ENCODE measurements at regions of chr3 and their contacts with region 1.

Region 1: GRCh38 chr3:123642182-123642956 is 57.5 kb upstream of the HACD2 start:
- DNase-seq: peak; percentile 79
- CTCF ChIP-seq: peak; percentile 69

Region 2: DNA sequence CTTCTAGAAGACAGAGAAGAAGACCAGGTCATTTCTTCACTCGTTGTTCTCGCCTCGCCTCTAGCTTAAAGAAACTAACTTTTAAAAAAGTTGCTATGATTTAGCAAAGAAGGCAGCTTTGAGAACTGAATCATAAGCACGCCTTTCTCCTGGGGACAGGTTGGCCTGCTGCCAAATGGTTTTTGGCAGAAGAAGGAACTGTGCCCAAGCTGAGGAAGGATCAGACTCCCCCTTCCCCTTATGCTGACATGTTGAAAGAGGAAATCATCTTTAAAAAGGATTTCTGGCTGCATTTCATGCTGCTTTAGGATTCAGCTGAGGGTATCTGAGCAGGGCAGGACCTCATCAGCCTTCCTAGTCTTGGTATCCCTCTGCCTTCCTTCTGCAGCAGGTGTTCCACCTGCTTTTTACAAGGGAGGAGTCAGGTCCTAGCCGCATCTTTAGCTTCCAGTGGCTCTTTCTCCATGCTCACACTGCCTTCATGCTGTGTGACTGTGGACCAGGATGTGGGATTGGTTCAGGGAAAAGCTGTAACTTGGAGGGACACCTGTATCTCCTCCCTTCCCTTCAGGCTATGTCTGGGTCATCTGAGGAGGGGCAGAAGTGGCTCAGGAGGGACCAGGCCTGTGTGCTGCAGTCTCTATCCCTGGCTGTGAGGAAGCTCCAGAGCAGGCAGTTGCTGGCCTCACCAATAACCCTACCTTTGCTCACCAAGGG is 23.4 kb before region 1 on chr3:
- CTCF ChIA-PET with region 1: interaction called, 14 read pairs
- POLR2A ChIA-PET with region 1: no interaction called
- DNase-seq: no peak
- CTCF ChIP-seq: no peak

Region 3: GRCh38 chr3:123632161-123632655 is 10.2 kb before region 1 on chr3:
- CTCF ChIA-PET with region 1: interaction called, 24 read pairs
- POLR2A ChIA-PET with region 1: no interaction called
- DNase-seq: no peak
- CTCF ChIP-seq: no peak

Region 4: DNA sequence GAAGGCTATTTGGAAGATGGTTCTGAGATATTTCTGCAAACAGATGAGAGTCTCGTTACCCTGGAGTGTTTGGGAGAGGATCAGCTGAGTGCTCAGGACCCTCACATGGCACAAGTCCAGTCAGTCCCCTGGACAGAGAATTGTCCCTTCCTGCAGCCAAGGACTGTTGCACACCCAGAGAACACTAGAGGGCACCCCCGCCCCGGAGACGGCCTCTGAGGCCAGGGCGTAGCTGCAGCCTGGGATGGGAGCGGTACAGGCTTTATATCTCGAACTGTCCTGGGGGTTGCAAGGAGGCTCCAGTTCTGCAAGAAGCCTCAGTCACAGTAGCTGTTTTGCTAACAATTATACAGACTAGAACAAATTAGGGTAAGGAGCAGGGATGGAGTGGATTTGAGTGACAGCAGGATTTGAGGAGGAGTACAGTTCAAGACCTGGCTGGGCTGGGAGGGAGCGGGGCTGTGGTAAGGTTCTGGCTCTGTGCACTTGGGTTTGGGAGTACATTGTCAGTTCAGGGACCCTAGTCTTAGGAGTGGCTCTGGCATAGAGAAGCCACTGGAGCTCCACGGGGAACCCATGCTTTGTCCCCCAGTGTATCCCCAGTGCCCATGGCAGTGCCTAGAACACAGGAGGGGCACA is 10.1 kb after region 1 on chr3:
- CTCF ChIA-PET with region 1: interaction called, 71 read pairs
- POLR2A ChIA-PET with region 1: no interaction called
- DNase-seq: peak; percentile 77
- CTCF ChIP-seq: peak; percentile 89

Region 5: DNA sequence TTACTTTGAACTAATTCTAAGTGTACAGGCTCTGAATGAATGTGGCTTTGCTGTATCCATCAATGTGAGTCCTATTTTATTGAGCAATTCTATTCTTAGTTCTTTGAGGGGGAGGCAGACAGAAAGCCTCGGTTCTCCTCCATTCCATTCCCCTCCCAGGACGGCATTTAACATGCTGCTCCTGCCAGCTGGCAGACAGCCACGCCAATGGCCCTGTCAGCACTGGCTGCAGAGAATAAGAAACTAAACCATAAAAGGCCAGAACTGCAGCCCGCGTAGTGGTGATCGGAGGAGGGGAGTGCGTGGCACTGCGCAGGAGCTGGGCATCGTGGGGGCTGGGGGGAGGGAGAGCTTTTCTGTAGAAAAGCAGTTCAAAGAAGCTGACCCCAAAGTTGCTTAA is 18.5 kb after region 1 on chr3:
- CTCF ChIA-PET with region 1: interaction called, 71 read pairs
- POLR2A ChIA-PET with region 1: no interaction called
- DNase-seq: no peak
- CTCF ChIP-seq: no peak

Region 6: DNA sequence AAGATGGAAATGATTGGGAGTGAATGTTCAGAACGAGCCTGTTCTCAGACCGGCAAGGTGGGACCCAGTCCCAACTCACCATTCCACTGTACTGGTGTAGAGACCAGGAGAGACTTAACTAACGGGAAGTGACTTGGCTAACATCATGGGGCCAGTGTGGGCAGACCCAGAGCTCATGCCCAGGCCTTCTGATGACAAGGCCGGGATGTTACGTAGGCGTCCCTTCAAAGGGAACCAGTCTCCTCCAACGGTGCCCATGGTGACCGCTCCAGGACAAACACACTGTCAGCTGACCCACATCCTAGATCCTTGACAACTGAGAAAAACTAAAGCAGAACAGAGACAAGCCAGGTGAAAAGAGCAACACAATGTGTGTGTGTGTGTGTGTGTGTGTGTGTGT is 70.8 kb after region 1 on chr3:
- CTCF ChIA-PET with region 1: interaction called, 24 read pairs
- POLR2A ChIA-PET with region 1: no interaction called
- DNase-seq: no peak
- CTCF ChIP-seq: no peak

Region 7: DNA sequence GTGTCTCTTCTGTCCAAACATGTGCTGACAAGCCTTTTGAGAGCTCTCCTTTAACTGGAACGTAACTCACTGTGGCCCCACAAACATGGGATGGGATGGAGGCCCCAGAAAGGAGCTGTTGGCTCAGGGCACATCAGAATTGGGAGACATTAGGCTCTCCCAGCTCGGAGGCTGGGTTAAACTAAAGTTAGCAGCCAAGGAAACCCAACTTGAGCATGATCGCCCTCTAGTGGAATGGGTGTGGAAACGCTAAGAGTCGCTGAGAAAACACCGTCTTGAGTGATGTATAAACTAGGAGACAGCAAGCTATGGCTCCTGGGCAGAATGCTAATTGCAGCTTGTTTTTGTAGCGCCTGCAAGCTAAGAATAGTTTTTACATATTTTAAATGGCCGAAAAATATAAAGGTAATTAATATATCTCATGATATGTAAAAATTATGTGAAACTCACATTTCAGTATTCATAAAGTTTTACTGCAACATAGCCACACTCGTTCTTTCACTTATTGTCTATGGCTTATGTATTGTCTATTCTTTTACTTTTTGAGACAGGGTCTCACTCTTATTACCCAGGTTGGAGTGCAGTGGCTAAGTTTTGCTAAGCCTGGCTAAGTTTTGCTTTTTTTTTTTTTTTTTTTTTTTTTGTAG is 81.3 kb after region 1 on chr3:
- CTCF ChIA-PET with region 1: interaction called, 66 read pairs
- POLR2A ChIA-PET with region 1: no interaction called
- DNase-seq: peak; percentile 78
- CTCF ChIP-seq: peak; percentile 85

Measured in GM10248 (cell line).